ENCODE measurements at regions of chr3 and their contacts with region 1.

Region 1: DNA sequence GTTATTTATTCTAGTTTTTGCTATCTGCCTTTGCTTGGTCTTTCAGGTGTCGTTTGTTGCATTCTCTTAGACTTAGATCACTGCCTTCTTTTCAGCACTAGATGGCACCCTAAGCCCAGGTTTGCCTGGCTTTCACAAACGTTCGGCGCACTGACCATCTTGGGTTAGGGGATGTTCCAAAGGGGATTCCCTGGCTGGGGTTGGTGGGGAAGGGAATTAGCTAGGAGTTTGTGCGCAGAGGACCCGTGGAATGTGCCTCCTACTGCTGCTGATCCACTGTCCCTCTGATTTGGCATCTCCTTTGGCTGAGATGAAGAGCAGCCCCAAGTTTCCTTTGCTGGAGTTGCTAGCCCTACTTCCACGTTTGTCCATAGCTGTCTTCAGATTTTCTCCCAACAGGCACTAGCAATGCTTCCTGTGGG is 33.9 kb downstream of the PFN2 start:
- DNase-seq: peak; percentile 37
- ATAC-seq: peak; percentile 93
- H3K4me3 ChIP-seq: no peak overlapping the region
- H3K27ac ChIP-seq: no peak overlapping the region
- H3K4me1 ChIP-seq: no peaks in the 10 kb centered on the region
- H3K27me3 ChIP-seq: no peaks in the 10 kb centered on the region
- CTCF ChIP-seq: peak; percentile 79 to 87 (median 82)
- EP300 ChIP-seq: no peak
- POLR2A ChIP-seq: no peak
- RAD21 ChIP-seq: peak; percentile 80

Region 2: GRCh38 chr3:149925860-149926259 is 11.0 kb before region 1 on chr3:
- CTCF ChIA-PET with region 1: interaction called, 25 read pairs
- POLR2A ChIA-PET with region 1: no interaction called
- RAD21 ChIA-PET with region 1: no interaction called
- SMC1A ChIA-PET with region 1: interaction called, 9 read pairs
- in situ Hi-C with region 1: no loop called
- intact Hi-C with region 1: no loop called
- DNase-seq: no peak
- ATAC-seq: no peak
- H3K4me3 ChIP-seq: no peak overlapping the region
- H3K27ac ChIP-seq: no peak overlapping the region
- H3K4me1 ChIP-seq: no peaks in the 10 kb centered on the region
- H3K27me3 ChIP-seq: no peaks in the 10 kb centered on the region
- CTCF ChIP-seq: no peak
- EP300 ChIP-seq: no peak
- POLR2A ChIP-seq: no peak
- RAD21 ChIP-seq: no peak

Region 3: GRCh38 chr3:149947231-149947630 is 10.4 kb after region 1 on chr3:
- CTCF ChIA-PET with region 1: interaction called, 16 read pairs
- POLR2A ChIA-PET with region 1: no interaction called
- RAD21 ChIA-PET with region 1: no interaction called
- SMC1A ChIA-PET with region 1: interaction called, 11 read pairs
- in situ Hi-C with region 1: no loop called
- intact Hi-C with region 1: no loop called
- DNase-seq: no peak
- ATAC-seq: no peak
- H3K4me3 ChIP-seq: no peak overlapping the region
- H3K27ac ChIP-seq: no peak overlapping the region
- H3K4me1 ChIP-seq: no peaks in the 10 kb centered on the region
- H3K27me3 ChIP-seq: no peaks in the 10 kb centered on the region
- CTCF ChIP-seq: no peak
- EP300 ChIP-seq: no peak
- POLR2A ChIP-seq: no peak
- RAD21 ChIP-seq: no peak

Region 4: GRCh38 chr3:149958171-149958796 is 21.5 kb after region 1 on chr3:
- CTCF ChIA-PET with region 1: interaction called, 31 read pairs
- POLR2A ChIA-PET with region 1: no interaction called
- RAD21 ChIA-PET with region 1: interaction called, 3 read pairs
- SMC1A ChIA-PET with region 1: interaction called, 23 read pairs
- in situ Hi-C with region 1: no loop called
- intact Hi-C with region 1: no loop called
- DNase-seq: no peak
- ATAC-seq: peak; percentile 53
- H3K4me3 ChIP-seq: no peak overlapping the region
- H3K27ac ChIP-seq: no peak overlapping the region
- H3K4me1 ChIP-seq: no peaks in the 10 kb centered on the region
- H3K27me3 ChIP-seq: no peaks in the 10 kb centered on the region
- CTCF ChIP-seq: no peak
- EP300 ChIP-seq: no peak
- POLR2A ChIP-seq: no peak
- RAD21 ChIP-seq: no peak

Region 5: GRCh38 chr3:149975919-149976318 is 39.1 kb after region 1 on chr3:
- CTCF ChIA-PET with region 1: interaction called, 17 read pairs
- POLR2A ChIA-PET with region 1: no interaction called
- RAD21 ChIA-PET with region 1: no interaction called
- SMC1A ChIA-PET with region 1: interaction called, 4 read pairs
- in situ Hi-C with region 1: no loop called
- intact Hi-C with region 1: no loop called
- DNase-seq: no peak
- ATAC-seq: peak; percentile 60
- H3K4me3 ChIP-seq: no peak overlapping the region
- H3K27ac ChIP-seq: no peak overlapping the region
- H3K4me1 ChIP-seq: no peaks in the 10 kb centered on the region
- H3K27me3 ChIP-seq: 0 out of 4 replicates have a peak, but pooled peaks cover 0 to 4% of the 10 kb centered on the region in 2 experiments
- CTCF ChIP-seq: peak; percentile 14 to 39 (median 30); a peak in 4 of 6 replicates
- EP300 ChIP-seq: no peak
- POLR2A ChIP-seq: no peak
- RAD21 ChIP-seq: 0 out of 2 replicates have a peak, but pooled peaks have one; percentile 21

Region 6: GRCh38 chr3:150216041-150216811 is 279.4 kb after region 1 on chr3:
- CTCF ChIA-PET with region 1: interaction called, 41 read pairs
- POLR2A ChIA-PET with region 1: no interaction called
- RAD21 ChIA-PET with region 1: no interaction called
- SMC1A ChIA-PET with region 1: interaction called, 19 read pairs
- in situ Hi-C with region 1: no loop called
- intact Hi-C with region 1: loop called (anchors 1 kb)
- DNase-seq: no peak
- ATAC-seq: no peak; the same call in 1 of the 3 replicates
- H3K4me3 ChIP-seq: no peak overlapping the region
- H3K27ac ChIP-seq: no peak overlapping the region
- H3K4me1 ChIP-seq: no peaks in the 10 kb centered on the region
- H3K27me3 ChIP-seq: no peaks in the 10 kb centered on the region
- CTCF ChIP-seq: no peak
- EP300 ChIP-seq: no peak
- POLR2A ChIP-seq: no peak
- RAD21 ChIP-seq: no peak

Measured in GM12878 (cell line).